ENCODE measurements at regions of chr2 and their contacts with region 1.

Region 1: DNA sequence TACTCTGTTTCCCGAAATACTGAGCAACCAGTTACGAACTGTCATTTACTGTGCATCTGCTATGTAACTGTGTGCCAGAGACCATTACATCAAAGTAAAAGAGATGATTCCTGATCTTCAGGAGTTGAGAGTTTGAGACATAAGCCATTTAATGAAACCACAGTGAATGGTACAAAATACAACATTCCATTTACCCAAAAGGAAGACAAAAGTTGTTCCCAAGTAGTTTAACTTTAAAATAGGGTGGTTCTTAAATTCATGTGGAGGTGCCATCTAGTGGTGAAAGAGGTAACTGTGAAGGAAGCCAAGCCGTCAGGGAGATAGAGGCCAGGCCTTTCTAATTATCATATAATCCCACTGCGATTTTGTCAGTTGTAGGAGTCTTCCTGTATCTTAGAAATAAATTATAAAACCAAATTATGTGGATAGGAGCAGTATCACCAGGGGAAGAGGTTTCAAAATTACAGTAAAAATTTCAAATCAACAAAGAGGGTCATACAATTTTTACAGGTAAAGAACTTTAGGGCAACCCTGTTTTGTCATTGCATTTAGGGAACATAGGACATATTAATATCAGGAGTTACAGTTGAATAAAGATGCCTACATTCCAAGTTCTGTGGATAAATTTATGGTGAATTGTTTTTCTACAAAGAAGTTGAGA is 67.7 kb downstream of the EPAS1 start:
- DNase-seq: peak; percentile 30
- ATAC-seq: peak; percentile 72
- H3K4me3 Mint-ChIP-seq: no peak overlapping the region
- H3K27ac Mint-ChIP-seq: no peak overlapping the region
- H3K4me1 Mint-ChIP-seq: no peaks in the 10 kb centered on the region
- H3K27me3 Mint-ChIP-seq: no peaks in the 10 kb centered on the region
- CTCF ChIP-seq: peak; percentile 66

Region 2: DNA sequence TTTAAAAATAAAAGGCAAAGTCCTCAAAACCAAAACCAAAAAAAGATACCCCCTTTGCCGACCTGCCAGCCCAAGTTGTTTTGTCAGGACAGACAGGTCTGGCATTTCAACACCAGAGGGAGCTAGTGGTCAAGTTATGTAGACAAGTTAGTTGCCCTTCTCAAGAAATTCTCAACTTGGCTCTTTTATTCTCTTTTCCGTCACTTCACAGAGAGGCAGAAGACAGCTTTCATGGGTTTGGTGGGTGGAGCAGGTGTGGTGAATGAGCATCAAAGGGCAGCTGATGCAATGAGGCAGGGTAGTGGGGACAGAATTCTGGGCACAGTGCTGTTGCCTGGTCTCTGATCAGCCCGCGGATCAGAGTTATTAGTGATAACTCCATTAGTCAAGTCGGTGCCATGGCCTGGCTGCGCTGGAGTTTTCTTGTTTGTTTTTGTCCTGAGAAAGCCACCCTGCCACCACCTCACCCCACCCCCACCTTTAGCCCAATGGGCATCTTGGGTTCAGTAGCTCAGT is 371.4 kb before region 1 on chr2:
- CTCF ChIA-PET with region 1: interaction called, 20 read pairs
- POLR2A ChIA-PET with region 1: no interaction called
- DNase-seq: peak; percentile 74
- ATAC-seq: peak; percentile 86
- H3K4me3 Mint-ChIP-seq: no peak overlapping the region
- H3K27ac Mint-ChIP-seq: no peak overlapping the region
- H3K4me1 Mint-ChIP-seq: peaks cover 15% of the 10 kb centered on the region
- H3K27me3 Mint-ChIP-seq: no peaks in the 10 kb centered on the region
- CTCF ChIP-seq: peak; percentile 55

Region 3: GRCh38 chr2:46230115-46230571 is 134.8 kb before region 1 on chr2:
- CTCF ChIA-PET with region 1: interaction called, 19 read pairs
- POLR2A ChIA-PET with region 1: no interaction called
- DNase-seq: peak; percentile 28
- ATAC-seq: peak; percentile 43
- H3K4me3 Mint-ChIP-seq: no peak overlapping the region; the same call in 1 of the 2 replicates
- H3K27ac Mint-ChIP-seq: peak overlapping the region; percentile 82
- H3K4me1 Mint-ChIP-seq: peaks cover 46% of the 10 kb centered on the region
- H3K27me3 Mint-ChIP-seq: no peaks in the 10 kb centered on the region
- CTCF ChIP-seq: no peak

Region 4: GRCh38 chr2:46335391-46336282 is 29.3 kb before region 1 on chr2:
- CTCF ChIA-PET with region 1: interaction called, 11 read pairs
- POLR2A ChIA-PET with region 1: no interaction called
- DNase-seq: peak; percentile 33
- ATAC-seq: peak; percentile 73
- H3K4me3 Mint-ChIP-seq: peak overlapping the region; percentile 49
- H3K27ac Mint-ChIP-seq: peak overlapping the region; percentile 73
- H3K4me1 Mint-ChIP-seq: peaks cover 47% of the 10 kb centered on the region
- H3K27me3 Mint-ChIP-seq: peaks cover 10% of the 10 kb centered on the region
- CTCF ChIP-seq: no peak